Right ventricle myocardium inferior (tissue), 1 donor: ENCODE measurements at regions of chr12 and their contacts with region 1.

Region 1: DNA sequence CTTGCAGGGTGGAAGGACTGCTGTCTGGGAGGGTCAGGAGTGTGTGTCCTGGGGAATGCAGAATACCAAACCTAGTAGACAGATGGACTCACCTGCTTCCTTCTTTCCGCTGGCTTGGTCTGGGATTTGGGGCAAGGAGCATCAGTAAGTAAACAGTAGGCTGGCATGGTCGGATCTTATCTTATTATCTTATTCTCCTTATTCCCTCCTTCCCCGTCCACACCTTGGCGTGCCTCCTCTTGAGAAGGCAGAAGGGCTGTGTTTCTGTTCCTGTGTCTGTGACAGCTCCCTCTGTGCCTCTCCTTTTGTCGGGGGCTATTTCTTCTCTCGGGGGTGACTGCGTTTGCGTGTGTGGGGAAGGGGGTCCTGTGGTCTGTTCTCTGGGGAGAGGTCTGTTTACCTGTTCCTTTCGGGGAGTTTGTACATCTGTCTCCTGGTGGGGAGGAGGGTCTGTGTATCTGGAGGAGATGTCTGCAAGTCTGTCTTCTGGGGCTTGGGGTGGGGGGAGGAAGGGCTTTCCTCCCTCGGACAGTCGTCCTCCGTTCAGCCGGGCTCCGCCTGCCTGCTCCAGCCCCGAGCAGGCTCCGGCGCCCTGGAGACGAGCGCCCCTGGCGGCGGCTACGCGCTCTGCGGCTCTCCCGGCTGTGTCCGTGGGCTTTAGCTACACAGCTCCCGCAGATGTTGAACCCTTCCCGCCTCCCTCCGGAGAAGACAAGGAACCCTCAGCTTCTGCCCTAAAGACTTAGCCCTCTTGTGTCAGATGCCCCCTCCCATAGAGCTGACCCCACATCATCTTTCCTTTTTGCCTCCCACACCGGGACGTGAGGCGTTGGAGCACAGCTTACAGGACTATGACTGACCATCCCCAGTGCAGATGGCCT is 4.3 kb downstream of the KRT86 start:
- DNase-seq: peak; percentile 82
- ATAC-seq: peak; percentile 90

Region 2: DNA sequence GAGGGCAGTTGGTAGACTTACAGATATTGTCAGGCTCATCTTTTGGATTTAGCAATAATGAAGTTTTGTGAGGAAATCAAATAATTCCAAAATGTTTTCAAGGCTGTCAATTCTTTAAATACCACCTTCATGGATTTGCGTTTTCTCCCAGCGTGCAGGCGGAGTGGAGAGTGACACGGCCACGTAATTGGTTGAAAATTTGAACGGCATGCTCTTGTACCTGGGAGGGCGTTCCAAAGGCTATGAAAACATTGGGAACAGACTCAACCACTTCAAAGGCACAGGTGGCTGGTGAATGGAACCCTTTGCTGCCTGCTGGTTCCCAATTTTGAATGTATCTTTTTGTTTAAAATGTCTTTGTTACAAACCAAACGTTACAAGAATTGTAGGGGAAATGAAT is 186.9 kb before region 1 on chr12:
- intact Hi-C with region 1: no loop called
- DNase-seq: no peak
- ATAC-seq: no peak

Region 3: DNA sequence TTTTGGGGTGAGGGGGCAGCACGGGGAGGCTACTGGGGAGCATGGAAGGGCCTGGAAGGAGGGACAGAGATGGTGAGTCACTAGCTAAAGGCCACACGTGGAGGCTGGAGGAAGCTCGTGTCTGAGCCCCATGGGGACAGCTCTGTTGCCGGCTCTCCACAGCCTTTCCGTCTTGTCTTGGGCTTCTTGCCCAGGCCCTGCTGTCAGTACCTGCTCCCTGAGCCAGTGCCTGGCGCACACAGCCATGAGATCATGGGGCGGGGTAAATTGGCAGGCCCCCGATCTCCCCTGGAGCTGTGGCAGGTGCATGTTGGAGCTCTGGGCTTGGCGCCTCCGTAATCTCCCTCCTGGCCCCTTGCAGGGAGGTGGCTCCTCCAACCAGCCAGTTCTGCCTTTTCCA is 70.9 kb before region 1 on chr12:
- intact Hi-C with region 1: loop called (anchors 5 kb)
- DNase-seq: no peak
- ATAC-seq: peak; percentile 74